ENCODE measurements at regions of chr10 and their contacts with region 1.

Region 1: DNA sequence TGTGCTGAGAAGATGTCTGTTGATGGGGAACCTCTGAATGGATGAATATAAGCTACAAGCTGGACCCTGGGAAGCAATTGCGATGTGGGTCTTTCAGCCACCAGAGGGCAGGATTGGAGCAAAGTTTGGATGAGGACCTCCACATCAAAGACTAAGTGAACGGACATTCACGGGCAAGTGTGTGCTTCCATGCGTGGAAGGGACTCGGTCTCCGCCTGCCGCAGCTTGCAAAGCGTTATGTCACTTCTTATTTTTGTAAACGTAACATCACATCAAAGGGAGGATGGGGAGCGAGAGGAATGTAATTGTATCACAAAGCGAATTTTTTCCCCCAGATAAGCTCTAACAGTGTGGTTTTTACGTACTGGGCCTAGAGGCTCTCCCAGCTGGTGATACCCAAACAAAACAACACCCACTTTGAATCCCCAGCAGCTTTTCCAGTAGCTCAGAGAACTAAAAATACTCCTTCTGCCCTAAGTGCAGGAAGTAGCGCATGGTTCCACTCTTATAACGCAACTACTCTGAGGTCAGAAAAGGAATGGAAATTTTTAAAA is 65.0 kb downstream of the VWA2 start:
- DNase-seq: peak; percentile 82
- H3K4me3 Mint-ChIP-seq: peak overlapping the region; percentile 73
- H3K27ac Mint-ChIP-seq: peak overlapping the region; percentile 29
- H3K4me1 Mint-ChIP-seq: peaks cover 11% of the 10 kb centered on the region
- H3K27me3 Mint-ChIP-seq: peaks cover 20% of the 10 kb centered on the region

Region 2: GRCh38 chr10:114397651-114398145 is 93.6 kb after region 1 on chr10:
- CTCF ChIA-PET with region 1: interaction called, 11 read pairs
- DNase-seq: no peak
- H3K4me3 Mint-ChIP-seq: no peak overlapping the region
- H3K27ac Mint-ChIP-seq: no peak overlapping the region
- H3K4me1 Mint-ChIP-seq: peaks cover 29% of the 10 kb centered on the region
- H3K27me3 Mint-ChIP-seq: peaks cover 95% of the 10 kb centered on the region

Region 3: DNA sequence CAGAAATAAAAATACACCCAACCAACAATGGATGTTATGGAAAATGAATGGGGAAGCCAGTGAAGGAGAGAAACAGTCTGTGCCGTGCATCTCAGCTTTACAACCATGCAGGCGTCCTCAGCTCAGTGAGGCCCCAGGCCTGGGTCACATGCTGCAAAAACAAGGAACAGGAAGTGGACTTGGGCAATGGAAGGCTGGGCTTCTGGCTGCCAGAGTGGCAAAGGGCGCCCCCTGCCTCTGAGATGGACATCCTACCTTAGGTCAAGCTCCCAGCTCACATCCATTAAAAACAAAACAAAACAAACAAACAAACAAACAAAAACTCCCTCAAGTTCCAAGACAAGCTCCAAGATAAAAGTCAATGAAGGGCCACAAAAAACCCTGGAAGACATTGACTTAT is 154.9 kb after region 1 on chr10:
- CTCF ChIA-PET with region 1: interaction called, 28 read pairs
- DNase-seq: peak; percentile 34
- H3K4me3 Mint-ChIP-seq: no peak overlapping the region
- H3K27ac Mint-ChIP-seq: no peak overlapping the region
- H3K4me1 Mint-ChIP-seq: peaks cover 4% of the 10 kb centered on the region
- H3K27me3 Mint-ChIP-seq: no peaks in the 10 kb centered on the region

Region 4: DNA sequence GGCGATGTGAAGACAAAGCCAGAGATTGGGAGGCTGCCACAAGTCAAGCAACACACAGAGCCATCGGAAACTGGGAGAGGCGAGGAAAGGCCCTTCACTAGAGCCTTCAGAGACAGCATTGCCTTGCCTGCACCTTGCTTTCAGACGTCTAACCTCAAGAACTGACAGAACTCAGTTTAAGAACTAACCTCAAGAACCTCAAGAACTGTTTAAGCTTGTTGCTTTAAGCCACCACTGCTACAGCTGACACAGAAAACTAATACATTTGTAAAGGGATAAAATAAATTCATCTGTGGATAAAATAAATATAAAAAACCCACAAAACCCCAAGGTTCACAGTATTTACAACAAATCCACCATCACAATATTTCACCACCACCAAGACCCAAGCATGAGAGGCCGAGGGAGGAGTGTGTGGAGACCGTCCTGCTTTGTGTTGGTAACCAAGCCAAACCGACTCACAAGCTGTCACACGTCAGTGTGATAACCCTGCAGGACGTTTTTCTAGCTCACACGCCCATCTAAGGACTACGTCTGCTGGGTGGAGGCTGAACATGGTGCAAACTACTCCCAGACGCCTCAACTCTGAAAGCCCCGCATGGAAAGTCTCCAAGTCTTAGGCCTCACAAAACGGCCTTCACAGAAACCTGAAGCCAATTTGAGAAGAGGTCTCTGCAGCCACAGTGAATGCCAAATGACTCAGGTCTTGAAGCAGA is 237.1 kb after region 1 on chr10:
- CTCF ChIA-PET with region 1: interaction called, 11 read pairs
- DNase-seq: peak; percentile 82
- H3K4me3 Mint-ChIP-seq: peak overlapping the region; percentile 47
- H3K27ac Mint-ChIP-seq: peak overlapping the region; percentile 100
- H3K4me1 Mint-ChIP-seq: peaks cover 96% of the 10 kb centered on the region
- H3K27me3 Mint-ChIP-seq: no peaks in the 10 kb centered on the region

Region 5: DNA sequence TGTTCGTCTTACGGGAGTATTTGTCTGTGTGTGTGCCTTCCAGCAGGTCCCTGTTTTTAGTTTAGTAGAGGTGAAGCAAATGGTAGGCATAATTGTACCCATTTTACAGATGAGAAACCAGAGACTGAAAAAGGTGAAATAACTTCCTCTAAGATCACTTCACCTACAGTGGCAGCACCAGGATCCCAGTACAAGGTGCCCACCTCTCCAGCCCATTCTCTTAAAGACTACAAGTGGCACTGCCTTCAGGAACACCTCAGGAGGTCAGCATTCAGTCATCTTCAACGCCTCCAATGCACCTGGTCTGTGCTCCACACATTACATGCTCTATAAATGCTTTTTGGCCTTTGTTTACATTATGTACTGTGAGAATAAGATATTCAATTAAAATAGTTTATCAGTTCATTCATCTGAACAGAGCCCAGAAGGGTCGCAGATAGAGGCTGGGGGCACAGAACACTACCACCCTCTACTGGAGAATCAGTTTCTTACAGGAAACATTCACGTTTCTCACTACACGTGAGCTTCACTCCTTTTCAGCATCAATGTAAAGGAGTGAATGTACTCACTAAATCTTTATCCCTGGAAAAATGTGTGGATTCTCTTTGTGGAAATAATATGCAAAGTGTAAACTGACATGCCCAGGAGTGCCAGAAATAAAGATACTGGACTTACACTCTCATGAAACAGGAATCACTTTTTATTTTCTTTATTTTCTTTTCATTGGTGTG is 399.4 kb after region 1 on chr10:
- CTCF ChIA-PET with region 1: interaction called, 12 read pairs
- DNase-seq: peak; percentile 27
- H3K4me3 Mint-ChIP-seq: no peak overlapping the region
- H3K27ac Mint-ChIP-seq: no peak overlapping the region
- H3K4me1 Mint-ChIP-seq: no peaks in the 10 kb centered on the region
- H3K27me3 Mint-ChIP-seq: peaks cover 18% of the 10 kb centered on the region

Region 6: GRCh38 chr10:115129752-115130151 is 825.7 kb after region 1 on chr10:
- CTCF ChIA-PET with region 1: interaction called, 10 read pairs
- DNase-seq: no peak
- H3K4me3 Mint-ChIP-seq: no peak overlapping the region
- H3K27ac Mint-ChIP-seq: no peak overlapping the region
- H3K4me1 Mint-ChIP-seq: no peaks in the 10 kb centered on the region
- H3K27me3 Mint-ChIP-seq: no peaks in the 10 kb centered on the region

Measured in activated naive CD4-positive, alpha-beta T cell treated with anti-CD3 and anti-CD28 coated beads, Interleukin-2, amount 10 ng/mL, durations not matched to agents 7 days and 5 days (primary cell).